ENCODE measurements at regions of chr5 and their contacts with region 1.

Region 1: DNA sequence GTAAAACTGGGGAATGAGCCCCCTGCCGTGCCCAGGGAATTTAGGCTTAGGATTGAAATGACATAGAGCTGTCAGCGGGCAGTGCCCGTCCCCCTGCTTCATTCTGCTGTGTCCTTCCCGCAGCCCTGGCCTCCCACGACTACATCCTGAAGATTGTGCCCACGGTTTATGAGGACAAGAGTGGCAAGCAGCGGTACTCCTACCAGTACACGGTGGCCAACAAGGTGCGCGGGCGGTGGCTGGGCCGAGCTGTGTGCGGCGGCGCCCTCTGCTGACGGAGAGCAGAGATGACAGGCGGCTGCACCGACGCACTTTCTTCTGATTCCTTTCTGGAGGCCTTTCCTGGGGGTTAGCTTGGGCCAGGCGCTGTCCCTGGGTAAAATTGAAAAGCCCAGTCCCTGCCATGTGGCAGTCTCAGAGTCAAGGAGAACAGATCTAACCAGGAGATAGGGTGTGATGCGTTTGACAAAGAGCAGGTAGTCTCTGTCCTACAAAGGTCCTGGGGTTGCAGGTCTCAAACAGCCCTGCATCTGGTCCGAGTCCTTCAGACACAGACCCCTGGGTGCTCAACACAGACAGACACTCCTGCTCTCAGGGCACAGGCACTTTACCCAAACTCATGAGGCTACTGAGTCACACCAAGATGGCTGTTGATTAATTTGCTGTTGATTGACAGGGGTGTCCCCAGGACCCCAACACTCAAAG is 26.8 kb upstream of the RPL26L1 start:
- DNase-seq: peak; percentile 74 to 83 (median 82)
- ATAC-seq: peak; percentile 98
- H3K4me3 ChIP-seq: no peak overlapping the region
- H3K4me1 ChIP-seq: no peaks in the 10 kb centered on the region
- CTCF ChIP-seq: peak; percentile 88

Region 2: GRCh38 chr5:172714491-172715421 is 217.7 kb before region 1 on chr5:
- intact Hi-C with region 1: loop called (anchors 2 to 5 kb)
- DNase-seq: peak; percentile 73 to 88 (median 75)
- ATAC-seq: peak; percentile 81
- H3K4me3 ChIP-seq: no peak overlapping the region
- H3K4me1 ChIP-seq: peaks cover 9% of the 10 kb centered on the region
- CTCF ChIP-seq: peak; percentile 88

Measured in mucosa of descending colon (tissue), 3 donors.